ENCODE measurements at regions of chr6 and their contacts with region 1.

Region 1: DNA sequence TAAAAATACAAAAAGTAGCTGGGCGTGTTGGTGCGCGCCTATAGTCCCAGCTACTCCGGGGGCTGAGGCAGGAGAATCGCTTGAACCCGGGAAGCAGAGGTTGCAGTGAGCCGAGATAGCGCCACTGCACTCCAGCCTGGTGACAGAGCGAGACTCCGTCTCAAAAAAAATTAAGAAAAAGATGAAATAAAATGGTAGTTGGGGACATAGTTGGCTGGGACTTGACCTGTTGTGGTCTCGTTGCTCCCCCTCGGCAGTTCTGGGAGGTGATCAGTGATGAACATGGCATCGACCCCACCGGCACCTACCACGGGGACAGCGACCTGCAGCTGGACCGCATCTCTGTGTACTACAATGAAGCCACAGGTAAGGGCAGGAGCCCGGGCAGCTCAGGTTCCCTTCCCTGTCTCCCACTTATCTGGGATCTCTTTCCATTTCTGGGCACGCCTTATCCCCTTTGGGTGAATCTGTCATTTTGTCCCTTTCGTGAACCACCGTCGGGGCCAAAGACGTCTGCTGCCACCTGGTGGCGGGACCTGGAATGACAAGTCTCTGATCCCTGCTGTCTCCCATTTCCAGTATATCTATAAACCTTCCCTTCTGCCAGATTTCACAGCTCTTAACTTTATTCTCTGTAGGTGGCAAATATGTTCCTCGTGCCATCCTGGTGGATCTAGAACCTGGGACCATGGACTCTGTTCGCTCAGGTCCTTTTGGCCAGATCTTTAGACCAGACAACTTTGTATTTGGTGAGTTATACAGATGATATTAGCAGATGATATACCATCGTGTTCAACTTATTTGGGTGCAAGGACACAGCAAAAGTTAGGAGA is 2.3 kb downstream of the TUBB start:
- DNase-seq: peak; percentile 53
- H3K27ac ChIP-seq: peak overlapping the region; percentile 99
- CTCF ChIP-seq: peak; percentile 95

Region 2: DNA sequence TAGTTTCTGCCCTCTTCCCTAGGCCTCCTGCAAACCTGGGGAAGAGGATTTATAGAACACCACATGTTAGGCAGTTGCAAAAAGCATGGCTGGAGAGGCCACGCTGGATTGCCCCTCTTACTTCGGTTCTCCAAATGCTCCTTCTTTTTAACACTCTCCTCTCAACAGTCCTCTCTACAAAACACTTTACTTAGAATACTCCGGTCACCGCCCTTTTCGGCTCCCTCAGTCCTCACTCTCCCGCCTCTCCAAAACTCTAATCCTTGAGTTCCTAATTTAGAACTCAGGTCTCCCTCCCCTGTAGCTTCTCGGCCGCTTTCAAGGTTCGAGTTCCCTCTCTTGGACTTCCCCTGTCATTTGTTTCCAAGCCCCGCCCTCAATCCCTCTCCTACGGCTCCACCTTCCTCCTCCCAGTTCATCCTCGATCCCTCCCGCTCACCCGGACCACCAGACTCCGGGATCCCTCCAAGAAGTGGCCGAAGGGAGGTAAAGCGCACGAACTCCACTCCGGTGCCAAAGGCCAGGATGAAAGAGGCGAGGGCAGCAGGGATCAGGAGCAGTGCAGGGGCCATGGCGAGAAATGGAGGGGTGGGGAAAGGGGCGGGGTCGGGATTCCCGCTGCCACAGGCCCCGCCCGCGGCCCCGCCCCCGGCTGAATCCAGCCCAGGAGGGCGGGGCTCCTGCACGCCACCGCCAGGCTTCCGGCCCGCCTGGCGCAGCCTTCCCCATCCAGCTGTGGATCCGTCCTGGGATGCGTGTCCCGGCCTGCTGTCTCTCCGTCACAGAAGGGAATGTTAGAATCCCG is 31.9 kb before region 1 on chr6 and contains the start of gene NRM:
- CTCF ChIA-PET with region 1: interaction called, 12 read pairs
- POLR2A ChIA-PET with region 1: interaction called, 12 read pairs
- DNase-seq: peak; percentile 89
- H3K27ac ChIP-seq: peak within 1 kb of the TSS; percentile 97
- CTCF ChIP-seq: no peak

Region 3: GRCh38 chr6:30793521-30794194 is 71.2 kb after region 1 on chr6:
- CTCF ChIA-PET with region 1: no interaction called
- POLR2A ChIA-PET with region 1: no interaction called
- DNase-seq: no peak
- H3K27ac ChIP-seq: peak overlapping the region; percentile 32
- CTCF ChIP-seq: no peak

Measured in RWPE1 (cell line).